Naive thymus-derived CD4-positive, alpha-beta T cell (primary cell): ENCODE measurements at regions of chr3 and their contacts with region 1.

Region 1: GRCh38 chr3:39383045-39383880 is at the start of gene SLC25A38:
- DNase-seq: peak; percentile 60 to 86 (median 84)
- ATAC-seq: peak; percentile 86
- H3K4me3 ChIP-seq: peak within 1 kb of the TSS; percentile 88
- H3K4me3 Mint-ChIP-seq: peak within 1 kb of the TSS; percentile 91 to 99 (median 97)
- H3K27ac ChIP-seq: peak within 1 kb of the TSS; percentile 96
- H3K27ac Mint-ChIP-seq: peak within 1 kb of the TSS; percentile 95 to 100 (median 99)
- H3K4me1 ChIP-seq: peaks cover 26 to 39% of the 10 kb centered on the region in 2 donors
- H3K4me1 Mint-ChIP-seq: peaks cover 36 to 59% (median 49%) of the 10 kb centered on the region in 7 donors
- H3K27me3 ChIP-seq: no peaks in the 10 kb centered on the region
- H3K27me3 Mint-ChIP-seq: no peaks in the 10 kb centered on the region
- total RNA-seq, gene SLC25A38: 30.3 to 50.2 (median 46.8) TPM

Region 2: GRCh38 chr3:39107388-39108199 is 275.7 kb before region 1 on chr3 and contains the starts of genes GORASP1 and TTC21A:
- CTCF ChIA-PET with region 1: interaction called, 3 read pairs
- POLR2A ChIA-PET with region 1: no interaction called
- intact Hi-C with region 1: loop called (anchors 1 to 2 kb)
- DNase-seq: peak; percentile 33 to 79 (median 53)
- ATAC-seq: peak; percentile 74
- H3K4me3 ChIP-seq: peak within 1 kb of the TSS; percentile 95
- H3K4me3 Mint-ChIP-seq: peak within 1 kb of the TSS; percentile 88 to 100 (median 96)
- H3K27ac ChIP-seq: peak within 1 kb of the TSS; percentile 78
- H3K27ac Mint-ChIP-seq: peak within 1 kb of the TSS; percentile 84 to 96 (median 92)
- H3K4me1 ChIP-seq: peaks cover 18 to 22% of the 10 kb centered on the region in 2 donors
- H3K4me1 Mint-ChIP-seq: peaks cover 45 to 62% (median 52%) of the 10 kb centered on the region in 7 donors
- H3K27me3 ChIP-seq: no peaks in the 10 kb centered on the region
- H3K27me3 Mint-ChIP-seq: peaks cover 0 to 5% (median 0%) of the 10 kb centered on the region in 5 donors
- total RNA-seq, gene GORASP1: 28.2 to 58.5 (median 44.6) TPM
- total RNA-seq, gene TTC21A: 2.8 to 9.7 (median 5.3) TPM

Region 3: DNA sequence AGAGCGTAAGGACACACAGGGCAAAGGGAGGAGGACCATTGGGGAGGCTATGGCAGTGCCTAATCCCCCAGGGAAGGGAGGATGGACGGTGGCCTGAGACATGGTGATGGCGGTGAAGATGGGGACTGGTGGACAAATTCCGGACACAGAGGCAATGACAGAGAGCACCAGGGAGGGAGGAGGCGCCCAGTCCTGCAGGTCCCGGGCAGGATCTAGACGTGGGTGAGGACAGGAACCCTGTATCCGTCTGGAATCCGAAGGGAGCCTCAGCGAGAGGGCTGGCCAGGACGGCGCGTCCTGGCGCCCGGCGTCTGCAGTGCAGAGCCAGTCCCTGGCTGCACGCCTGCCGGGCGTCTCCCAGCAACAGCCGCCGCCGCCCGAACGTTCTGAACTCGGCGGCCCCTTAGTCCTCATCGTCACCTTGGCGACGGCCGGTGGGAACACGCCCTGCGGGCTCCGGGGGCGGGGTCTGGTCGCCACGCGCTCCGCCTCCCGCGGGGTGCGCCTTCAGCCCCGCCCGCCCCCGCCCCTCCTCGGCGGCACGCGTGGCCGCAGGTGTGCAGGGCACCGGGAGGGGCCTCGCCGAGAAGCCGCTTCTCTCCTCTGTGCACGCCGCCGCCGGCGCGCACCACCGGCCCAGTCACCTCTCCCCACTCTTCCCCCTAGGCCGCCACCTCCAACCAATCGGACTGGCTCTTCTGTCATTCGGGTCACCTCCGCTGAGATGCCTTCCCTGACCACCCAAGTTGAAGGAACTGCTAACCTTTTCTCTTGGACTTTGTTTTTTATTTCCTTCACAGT is 202.5 kb before region 1 on chr3:
- CTCF ChIA-PET with region 1: no interaction called
- POLR2A ChIA-PET with region 1: interaction called, 3 read pairs
- intact Hi-C with region 1: loop called (anchors 2 kb)
- DNase-seq: peak; percentile 80 to 86 (median 83)
- ATAC-seq: peak; percentile 94
- H3K4me3 ChIP-seq: peak overlapping the region; percentile 74
- H3K4me3 Mint-ChIP-seq: peak overlapping the region; percentile 79 to 94 (median 87)
- H3K27ac ChIP-seq: peak overlapping the region; percentile 68
- H3K27ac Mint-ChIP-seq: peak overlapping the region; percentile 71 to 94 (median 88)
- H3K4me1 ChIP-seq: peaks cover 23 to 33% of the 10 kb centered on the region in 2 donors
- H3K4me1 Mint-ChIP-seq: peaks cover 24 to 51% (median 38%) of the 10 kb centered on the region in 7 donors
- H3K27me3 ChIP-seq: no peaks in the 10 kb centered on the region
- H3K27me3 Mint-ChIP-seq: no peaks in the 10 kb centered on the region

Region 4: DNA sequence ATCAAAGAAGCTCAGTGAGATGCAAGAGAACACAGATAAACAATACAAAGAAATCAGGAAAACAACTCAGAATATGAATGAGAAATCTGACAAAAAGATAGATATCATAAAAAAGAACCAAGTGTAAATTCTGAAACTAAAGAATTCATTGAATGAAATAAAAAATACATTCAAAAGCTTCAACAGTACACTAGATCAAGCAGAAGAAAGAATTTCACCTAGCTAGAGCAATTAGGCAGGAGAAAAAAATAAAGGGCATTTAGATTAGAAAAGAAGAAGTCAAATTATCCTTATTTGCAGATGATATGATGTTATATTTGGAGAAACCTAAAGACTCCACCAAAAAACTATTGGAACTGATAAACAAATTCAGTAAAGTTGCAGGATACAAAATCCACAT is 84.0 kb before region 1 on chr3:
- CTCF ChIA-PET with region 1: no interaction called
- POLR2A ChIA-PET with region 1: no interaction called
- intact Hi-C with region 1: no loop called
- DNase-seq: no peak
- ATAC-seq: no peak
- H3K4me3 ChIP-seq: no peak overlapping the region
- H3K4me3 Mint-ChIP-seq: no peak overlapping the region
- H3K27ac ChIP-seq: no peak overlapping the region
- H3K27ac Mint-ChIP-seq: peak overlapping the region in 1 of 9 donors; percentile 48
- H3K4me1 ChIP-seq: peaks cover 0 to 8% of the 10 kb centered on the region in 2 donors
- H3K4me1 Mint-ChIP-seq: peaks cover 5 to 23% (median 22%) of the 10 kb centered on the region in 7 donors
- H3K27me3 ChIP-seq: no peaks in the 10 kb centered on the region
- H3K27me3 Mint-ChIP-seq: peaks cover 0 to 27% (median 14%) of the 10 kb centered on the region in 5 donors

Region 5: GRCh38 chr3:39361252-39361927 is 21.9 kb before region 1 on chr3:
- CTCF ChIA-PET with region 1: interaction called, 3 read pairs
- POLR2A ChIA-PET with region 1: interaction called, 3 read pairs
- intact Hi-C with region 1: loop called in 1 of 2 experiments (anchors 1 kb)
- DNase-seq: peak in 4 of 9 donors; percentile 25 to 70 (median 34)
- ATAC-seq: peak; percentile 93
- H3K4me3 ChIP-seq: no peak overlapping the region
- H3K4me3 Mint-ChIP-seq: peak overlapping the region; percentile 25 to 82 (median 68)
- H3K27ac ChIP-seq: no peak overlapping the region
- H3K27ac Mint-ChIP-seq: peak overlapping the region; percentile 13 to 89 (median 43)
- H3K4me1 ChIP-seq: peaks cover 18 to 28% of the 10 kb centered on the region in 2 donors
- H3K4me1 Mint-ChIP-seq: peaks cover 24 to 61% (median 49%) of the 10 kb centered on the region in 7 donors
- H3K27me3 ChIP-seq: no peaks in the 10 kb centered on the region
- H3K27me3 Mint-ChIP-seq: peaks cover 0 to 10% (median 0%) of the 10 kb centered on the region in 5 donors